ENCODE measurements at regions of chr18 and their contacts with region 1.

Region 1: GRCh38 chr18:56702946-56703345 is 51.8 kb downstream of the WDR7 start:
- DNase-seq: no peak
- H3K4me3 ChIP-seq: no peak overlapping the region
- H3K27ac ChIP-seq: no peak overlapping the region
- H3K27me3 ChIP-seq: no peaks in the 10 kb centered on the region
- CTCF ChIP-seq: peak; percentile 63

Region 2: DNA sequence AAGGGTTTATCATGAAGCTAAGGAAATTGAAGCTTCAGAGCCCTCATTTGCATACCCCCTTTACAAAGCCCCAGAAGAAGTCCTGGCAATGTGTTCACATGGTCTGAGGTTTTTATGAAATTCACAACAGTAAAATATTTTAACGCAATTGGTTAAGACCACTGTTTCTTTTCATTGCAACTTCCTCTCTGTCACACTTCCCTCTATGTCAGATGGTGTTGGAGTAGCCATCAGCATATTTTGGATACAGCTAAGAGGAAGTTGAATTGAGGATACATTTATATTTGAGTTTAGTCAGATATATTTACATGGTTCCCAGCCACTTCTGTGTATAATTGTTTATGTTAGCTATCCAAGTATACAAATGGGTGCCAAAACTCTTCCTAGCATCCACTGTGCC is 234.6 kb before region 1 on chr18:
- CTCF ChIA-PET with region 1: no interaction called
- POLR2A ChIA-PET with region 1: no interaction called
- DNase-seq: no peak
- H3K4me3 ChIP-seq: no peak overlapping the region
- H3K27ac ChIP-seq: no peak overlapping the region
- H3K27me3 ChIP-seq: no peaks in the 10 kb centered on the region
- CTCF ChIP-seq: no peak

Region 3: DNA sequence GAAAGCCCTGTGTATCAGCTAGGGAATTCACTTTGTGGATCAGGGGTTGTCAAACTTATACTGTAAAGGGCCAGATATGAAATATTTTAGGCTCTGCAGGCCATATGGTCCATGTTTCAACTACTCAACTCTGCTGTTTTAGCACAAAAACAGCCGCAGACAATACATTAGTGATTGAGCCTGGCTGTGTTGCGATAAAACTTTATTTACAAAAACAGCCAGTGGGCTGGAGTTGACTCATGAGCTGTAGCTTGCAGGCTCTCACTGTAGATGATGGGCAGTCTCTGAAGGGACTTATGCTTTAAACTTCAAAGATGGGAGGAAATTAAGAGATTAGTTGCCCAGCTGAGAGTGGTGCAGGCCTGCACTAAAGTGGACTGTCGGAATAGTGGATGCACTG is 18.7 kb before region 1 on chr18:
- CTCF ChIA-PET with region 1: interaction called, 22 read pairs
- POLR2A ChIA-PET with region 1: no interaction called
- DNase-seq: no peak
- H3K4me3 ChIP-seq: no peak overlapping the region
- H3K27ac ChIP-seq: no peak overlapping the region
- H3K27me3 ChIP-seq: no peaks in the 10 kb centered on the region
- CTCF ChIP-seq: no peak

Measured in AG04450 (cell line).